OCI-LY7 (cell line): ENCODE measurements at regions of chr10 and their contacts with region 1.

Region 1: DNA sequence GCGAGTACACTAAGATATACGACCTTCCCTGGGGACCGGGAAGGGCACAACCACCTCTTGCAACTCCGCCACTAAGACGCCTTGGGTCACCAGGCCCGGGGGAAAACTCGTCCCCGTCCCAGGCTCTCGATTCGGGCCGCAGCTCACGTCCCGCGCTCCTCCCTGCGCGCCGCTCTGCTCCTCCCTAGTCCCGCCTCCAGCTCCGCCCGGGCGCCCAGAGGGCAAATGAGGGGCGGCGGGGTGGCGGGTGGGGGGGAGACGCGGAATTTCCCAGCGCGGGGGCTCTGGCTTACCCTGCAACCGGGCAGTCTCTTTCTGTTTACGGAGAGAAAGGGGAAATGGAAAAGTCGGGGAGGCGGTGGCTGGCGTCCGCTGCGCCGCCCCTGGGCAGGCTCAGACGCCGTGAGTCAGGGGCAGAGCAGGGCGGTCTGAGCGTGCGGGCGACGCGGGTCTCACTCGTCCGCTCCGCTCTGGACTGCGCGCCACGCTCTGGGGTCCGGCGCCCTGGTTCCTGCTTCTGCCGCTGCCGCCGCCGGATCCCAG is at the start of gene MAP3K8:
- DNase-seq: peak; percentile 85
- H3K4me3 ChIP-seq: peak within 1 kb of the TSS; percentile 94
- H3K27ac ChIP-seq: peak within 1 kb of the TSS; percentile 51
- H3K4me1 ChIP-seq: peaks cover 51% of the 10 kb centered on the region
- CTCF ChIP-seq: no peak
- total RNA-seq, gene MAP3K8: 5.0 and 10.8 TPM in 2 replicates

Region 2: GRCh38 chr10:29969255-29970011 is 464.4 kb before region 1 on chr10:
- CTCF ChIA-PET with region 1: no interaction called
- POLR2A ChIA-PET with region 1: no interaction called
- intact Hi-C with region 1: no loop called
- DNase-seq: no peak
- H3K4me3 ChIP-seq: no peak overlapping the region
- H3K27ac ChIP-seq: no peak overlapping the region
- H3K4me1 ChIP-seq: no peaks in the 10 kb centered on the region
- CTCF ChIP-seq: no peak

Region 3: GRCh38 chr10:30348378-30348776 is 85.4 kb before region 1 on chr10:
- CTCF ChIA-PET with region 1: no interaction called
- POLR2A ChIA-PET with region 1: interaction called, 10 read pairs
- intact Hi-C with region 1: no loop called
- DNase-seq: peak; percentile 26
- H3K4me3 ChIP-seq: peak overlapping the region; percentile 81
- H3K27ac ChIP-seq: peak overlapping the region; percentile 63
- H3K4me1 ChIP-seq: peaks cover 30% of the 10 kb centered on the region
- CTCF ChIP-seq: no peak

Region 4: DNA sequence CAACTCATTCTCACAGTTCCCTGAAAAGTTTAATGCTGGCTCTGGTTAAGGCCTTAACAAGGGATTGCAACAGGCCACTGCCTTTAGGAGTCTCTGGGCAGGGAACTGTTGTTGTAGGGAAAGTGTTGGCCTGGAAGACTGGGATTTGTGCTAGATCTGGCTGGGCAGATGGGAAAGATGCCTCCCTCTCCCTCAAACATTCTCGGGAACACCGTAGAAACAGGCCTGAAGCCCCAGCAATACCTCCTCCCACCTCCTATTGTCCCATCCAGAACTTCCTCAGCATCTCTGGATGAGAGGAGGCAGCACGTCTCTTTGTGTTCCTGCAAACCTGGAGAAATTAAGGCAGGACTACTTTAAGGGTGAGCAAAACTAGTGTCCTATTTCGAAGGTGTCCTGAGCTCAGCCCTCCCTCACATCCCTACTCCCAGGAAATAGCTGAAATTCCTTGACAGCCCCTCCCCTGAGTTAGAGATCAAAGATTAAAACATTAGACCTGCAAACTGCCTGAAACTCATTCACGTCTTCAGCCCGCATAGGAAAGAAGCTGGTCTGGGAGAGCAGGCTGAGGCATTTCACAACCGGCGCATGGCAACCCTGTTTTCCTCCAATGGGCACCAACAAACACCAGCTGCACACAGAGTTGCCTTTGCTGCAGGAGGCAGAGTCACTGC is 10.7 kb before region 1 on chr10:
- CTCF ChIA-PET with region 1: interaction called, 3 read pairs
- POLR2A ChIA-PET with region 1: interaction called, 31 read pairs
- intact Hi-C with region 1: no loop called
- DNase-seq: peak; percentile 40
- H3K4me3 ChIP-seq: no peak overlapping the region
- H3K27ac ChIP-seq: no peak overlapping the region
- H3K4me1 ChIP-seq: peaks cover 49% of the 10 kb centered on the region
- CTCF ChIP-seq: no peak

Region 5: DNA sequence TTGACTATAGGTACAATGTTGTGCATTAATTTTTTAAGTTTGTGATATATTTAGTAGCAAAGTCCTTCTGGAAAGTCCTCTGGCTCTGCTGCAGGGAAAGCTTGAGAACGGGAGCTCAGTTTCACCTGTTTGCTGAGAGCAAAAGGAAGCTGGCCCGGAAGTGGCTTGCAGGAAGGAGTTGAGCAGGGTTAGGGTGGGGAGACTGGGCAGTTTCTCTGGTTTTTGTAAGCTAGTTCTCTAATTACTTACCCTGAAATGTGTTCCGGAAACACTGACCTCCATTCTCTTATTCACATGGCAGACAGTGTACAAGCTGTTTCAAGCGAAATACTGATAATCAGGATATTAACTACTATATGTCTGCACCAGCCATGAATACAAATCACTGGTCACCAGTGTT is 22.5 kb after region 1 on chr10:
- CTCF ChIA-PET with region 1: no interaction called
- POLR2A ChIA-PET with region 1: interaction called, 15 read pairs
- intact Hi-C with region 1: loop called (anchors 1 kb)
- DNase-seq: peak; percentile 83
- H3K4me3 ChIP-seq: peak overlapping the region; percentile 45
- H3K27ac ChIP-seq: peak overlapping the region; percentile 72
- H3K4me1 ChIP-seq: peaks cover 26% of the 10 kb centered on the region
- CTCF ChIP-seq: no peak

Region 6: DNA sequence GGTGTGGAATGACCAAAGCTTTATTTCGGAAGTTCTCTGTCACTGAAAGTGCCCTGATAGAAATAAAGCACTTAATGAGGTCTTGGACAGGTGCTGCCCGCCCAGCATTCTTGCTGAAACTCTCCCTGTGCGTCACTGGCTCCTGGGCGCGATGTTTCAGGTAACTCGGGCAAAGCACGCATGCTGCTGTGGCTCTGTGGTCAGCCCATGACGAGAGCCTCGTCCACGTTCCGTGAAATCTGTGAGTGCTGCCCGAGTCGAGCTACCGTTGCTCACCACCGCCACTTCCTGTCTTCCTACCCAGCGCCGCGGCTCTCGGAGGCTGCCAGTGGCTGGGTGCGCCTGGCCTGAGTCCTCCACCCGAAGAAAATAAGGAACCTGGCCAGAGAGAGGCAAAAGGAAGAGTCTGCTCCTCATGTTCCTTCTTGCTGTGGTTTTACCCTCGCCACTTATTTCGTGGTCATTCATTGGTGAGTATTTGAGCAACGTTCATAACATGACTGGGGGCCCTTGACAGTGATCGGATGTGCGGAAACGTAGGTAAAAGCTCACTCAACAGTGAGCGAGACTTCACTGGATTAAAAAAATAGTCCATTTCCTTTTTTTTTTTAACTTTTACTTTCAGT is 95.7 kb after region 1 on chr10:
- CTCF ChIA-PET with region 1: interaction called, 3 read pairs
- POLR2A ChIA-PET with region 1: interaction called, 14 read pairs
- intact Hi-C with region 1: loop called (anchors 1 kb)
- DNase-seq: peak; percentile 77
- H3K4me3 ChIP-seq: peak overlapping the region; percentile 47
- H3K27ac ChIP-seq: peak overlapping the region; percentile 60
- H3K4me1 ChIP-seq: peaks cover 14% of the 10 kb centered on the region
- CTCF ChIP-seq: no peak